ENCODE measurements at regions of chrX and their contacts with region 1.

Region 1: DNA sequence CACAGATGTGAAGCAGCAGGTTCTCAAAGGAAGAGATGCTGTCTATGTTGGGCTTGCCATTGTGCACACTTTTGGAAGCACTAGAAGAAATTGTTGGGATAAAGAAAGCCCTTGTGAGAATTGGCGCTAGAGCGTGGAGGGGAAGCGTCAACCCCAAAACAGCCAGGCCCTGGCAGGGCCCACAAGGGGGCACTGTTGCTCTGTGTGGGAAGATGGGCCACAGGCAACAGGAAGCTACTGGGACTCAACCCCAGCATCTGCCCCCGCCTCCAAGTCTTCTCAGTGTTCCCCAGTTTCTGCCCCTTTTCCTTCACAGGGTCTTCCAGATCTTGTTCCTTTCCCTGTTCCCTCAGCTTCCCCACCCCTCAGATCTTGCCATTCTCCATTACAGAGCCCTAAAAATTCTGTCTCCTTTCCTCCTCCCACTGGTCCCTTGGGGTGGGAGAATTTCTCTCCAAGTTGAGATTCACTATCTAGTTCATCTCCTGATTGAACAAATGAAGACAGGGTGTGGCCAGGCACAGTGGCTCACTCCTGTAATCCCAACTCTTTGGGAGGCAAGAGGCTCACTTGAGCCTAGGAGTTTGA is 85.5 kb downstream of the STARD8 start:
- DNase-seq: peak; percentile 63
- H3K4me3 ChIP-seq: no peak overlapping the region
- H3K27ac ChIP-seq: no peak overlapping the region
- H3K4me1 ChIP-seq: no peaks in the 10 kb centered on the region
- H3K27me3 ChIP-seq: no peaks in the 10 kb centered on the region
- CTCF ChIP-seq: peak; percentile 74

Region 2: GRCh38 chrX:68634654-68635232 is 98.3 kb before region 1 on chrX:
- intact Hi-C with region 1: no loop called
- DNase-seq: no peak
- H3K4me3 ChIP-seq: no peak overlapping the region
- H3K27ac ChIP-seq: no peak overlapping the region
- H3K4me1 ChIP-seq: no peaks in the 10 kb centered on the region
- H3K27me3 ChIP-seq: no peaks in the 10 kb centered on the region
- CTCF ChIP-seq: no peak

Region 3: DNA sequence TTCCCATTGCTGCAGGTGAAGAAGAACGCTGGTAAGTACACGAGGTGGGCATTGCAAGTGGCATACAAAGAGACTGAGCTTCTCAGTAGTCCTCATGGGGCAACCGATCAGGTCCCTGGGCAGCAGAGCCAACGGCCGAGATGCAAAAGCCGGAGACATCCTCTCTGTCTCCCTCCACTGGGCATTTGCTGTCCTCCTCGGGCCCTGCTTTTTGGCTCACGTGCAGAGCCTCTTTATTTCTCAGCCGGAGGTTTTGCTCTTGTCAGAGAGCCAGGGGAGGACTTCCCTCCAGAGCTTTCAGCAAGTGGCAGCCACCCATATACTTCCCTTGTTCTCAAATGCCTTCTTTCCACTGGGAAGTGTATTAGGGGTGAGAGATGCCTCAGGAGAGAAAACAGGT is 67.5 kb before region 1 on chrX:
- intact Hi-C with region 1: no loop called
- DNase-seq: peak; percentile 24
- H3K4me3 ChIP-seq: no peak overlapping the region
- H3K27ac ChIP-seq: peak overlapping the region; percentile 46
- H3K4me1 ChIP-seq: peaks cover 12% of the 10 kb centered on the region
- H3K27me3 ChIP-seq: no peaks in the 10 kb centered on the region
- CTCF ChIP-seq: peak; percentile 46

Region 4: GRCh38 chrX:68807818-68808217 is 74.8 kb after region 1 on chrX:
- intact Hi-C with region 1: loop called (anchors 5 kb)
- DNase-seq: no peak
- H3K4me3 ChIP-seq: no peak overlapping the region
- H3K27ac ChIP-seq: no peak overlapping the region
- H3K4me1 ChIP-seq: no peaks in the 10 kb centered on the region
- H3K27me3 ChIP-seq: no peaks in the 10 kb centered on the region
- CTCF ChIP-seq: peak; percentile 63